ENCODE measurements at regions of chr12 and their contacts with region 1.

Region 1: GRCh38 chr12:110468212-110469048 is at the starts of genes FAM216A and GPN3:
- DNase-seq: peak; percentile 94 to 97
- ATAC-seq: peak; percentile 94 to 95
- H3K4me3 ChIP-seq: peak within 1 kb of the TSS; percentile 63 to 89 (median 73)
- H3K27ac ChIP-seq: peak within 1 kb of the TSS; percentile 86 to 90 (median 88)
- H3K4me1 ChIP-seq: peaks cover 15 to 25% of the 10 kb centered on the region in 2 donors
- H3K27me3 ChIP-seq: no peaks in the 10 kb centered on the region
- CTCF ChIP-seq: no peak
- POLR2A ChIP-seq: peak; percentile 88 to 89
- total RNA-seq, gene FAM216A: 0.82 to 3.5 (median 2.2) TPM
- total RNA-seq, gene GPN3: 18.4 to 26.8 (median 24.6) TPM

Region 2: DNA sequence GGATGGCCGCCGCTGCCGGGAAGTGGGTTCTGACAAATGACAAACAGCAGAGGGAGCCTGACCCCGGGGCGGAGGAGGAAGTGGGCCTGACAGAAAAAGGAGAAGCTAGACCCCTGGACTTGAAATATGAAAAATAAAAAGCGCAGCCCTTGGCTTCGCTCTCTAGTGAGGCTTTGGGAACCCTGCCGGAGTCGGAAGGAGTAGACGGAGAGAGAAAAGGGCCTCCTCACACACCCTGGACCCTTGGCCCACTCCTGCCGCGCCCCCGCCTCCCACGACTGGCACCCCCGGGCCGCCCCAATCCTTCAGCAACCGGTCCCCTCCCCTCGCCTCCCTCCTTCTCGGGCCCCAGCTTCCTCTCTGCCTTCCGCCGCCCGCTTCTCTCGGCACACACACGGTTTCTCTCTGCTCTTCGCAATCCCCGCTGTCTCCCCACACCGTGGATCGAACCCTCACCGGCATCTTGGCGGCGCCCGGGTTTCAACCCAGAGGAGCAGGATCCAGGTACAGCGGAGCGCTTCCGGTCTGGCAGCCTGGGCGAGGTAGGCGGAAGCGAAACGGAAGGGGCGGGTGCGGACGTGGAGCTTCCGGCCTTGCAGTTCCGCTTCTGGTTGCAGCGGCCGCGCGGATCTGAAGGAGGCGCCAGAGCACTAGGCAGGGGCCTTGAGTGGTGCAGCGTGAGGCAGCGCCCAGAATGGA is 18.5 kb before region 1 on chr12 and contains the start of gene ARPC3:
- in situ Hi-C with region 1: no loop called
- intact Hi-C with region 1: loop called (anchors 1 kb)
- DNase-seq: peak; percentile 89 to 93
- ATAC-seq: peak; percentile 97 to 98
- H3K4me3 ChIP-seq: peak within 1 kb of the TSS; percentile 83 to 99 (median 92)
- H3K27ac ChIP-seq: peak within 1 kb of the TSS; percentile 86 to 97 (median 90)
- H3K4me1 ChIP-seq: peaks cover 7 to 8% of the 10 kb centered on the region in 2 donors
- H3K27me3 ChIP-seq: no peaks in the 10 kb centered on the region
- CTCF ChIP-seq: peak; percentile 81 to 95 (median 87)
- POLR2A ChIP-seq: peak; percentile 43 to 59
- total RNA-seq, gene ARPC3: 170 to 327 (median 213) TPM

Region 3: DNA sequence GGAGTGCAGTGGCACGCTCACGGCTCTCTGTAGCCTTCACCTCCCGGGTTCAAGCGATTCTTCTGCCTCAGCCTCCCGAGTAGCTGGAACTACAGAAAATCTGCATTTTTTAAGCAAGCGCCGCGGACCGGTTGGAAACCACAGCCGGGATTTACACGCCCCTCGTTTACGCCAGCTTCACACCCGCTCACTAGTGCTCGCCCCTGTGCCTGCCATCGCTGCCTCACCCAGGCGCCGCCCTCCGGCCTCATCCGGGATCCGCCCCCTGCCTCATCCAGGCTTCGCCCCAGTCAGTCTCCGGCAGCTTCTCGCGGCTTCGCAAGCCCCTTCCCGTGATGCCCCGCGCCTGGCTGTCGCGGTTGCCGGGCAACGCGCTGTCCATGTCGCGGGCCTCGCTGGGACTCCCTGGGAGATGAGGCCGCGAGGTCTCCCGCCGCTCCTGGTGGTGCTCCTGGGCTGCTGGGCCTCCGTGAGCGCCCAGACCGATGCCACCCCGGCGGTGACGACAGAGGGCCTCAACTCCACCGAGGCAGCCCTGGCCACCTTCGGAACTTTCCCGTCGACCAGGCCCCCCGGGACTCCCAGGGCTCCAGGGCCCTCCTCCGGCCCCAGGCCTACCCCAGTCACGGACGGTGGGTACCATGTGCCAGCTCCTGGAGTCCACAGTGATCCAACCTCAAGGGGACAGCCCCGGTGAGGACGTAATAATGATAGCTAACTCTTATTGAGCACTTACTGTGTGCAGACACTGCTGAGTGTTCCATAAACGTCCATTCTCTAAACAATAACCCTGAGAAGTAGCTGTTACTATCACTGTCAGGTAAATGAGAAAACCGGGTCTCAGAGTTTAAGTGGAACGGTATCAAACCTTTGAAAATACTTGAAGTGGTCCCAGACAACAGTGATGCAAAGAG is 145.6 kb after region 1 on chr12 and contains the start of gene TCTN1:
- in situ Hi-C with region 1: no loop called
- intact Hi-C with region 1: loop called (anchors 2 kb)
- DNase-seq: peak; percentile 93 to 95
- ATAC-seq: peak; percentile 94 to 97
- H3K4me3 ChIP-seq: peak within 1 kb of the TSS; percentile 67 to 94 (median 86)
- H3K27ac ChIP-seq: peak within 1 kb of the TSS; percentile 55 to 82 (median 70)
- H3K4me1 ChIP-seq: peaks cover 10 to 12% of the 10 kb centered on the region in 2 donors
- H3K27me3 ChIP-seq: no peaks in the 10 kb centered on the region
- CTCF ChIP-seq: peak in 1 of 5 experiments; percentile 23
- POLR2A ChIP-seq: peak; percentile 55 to 66
- total RNA-seq, gene TCTN1: 4.7 to 30.8 (median 22.7) TPM

Region 4: GRCh38 chr12:110627500-110628195 is 159.2 kb after region 1 on chr12:
- in situ Hi-C with region 1: no loop called
- intact Hi-C with region 1: no loop called
- DNase-seq: no peak
- ATAC-seq: no peak
- H3K4me3 ChIP-seq: no peak overlapping the region
- H3K27ac ChIP-seq: no peak overlapping the region
- H3K4me1 ChIP-seq: no peaks in the 10 kb centered on the region
- H3K27me3 ChIP-seq: no peaks in the 10 kb centered on the region
- CTCF ChIP-seq: no peak
- POLR2A ChIP-seq: no peak

Measured in gastrocnemius medialis (tissue), 4 donors.